Mammary epithelial cell (primary cell): ENCODE measurements at regions of chr3 and their contacts with region 1.

Region 1: DNA sequence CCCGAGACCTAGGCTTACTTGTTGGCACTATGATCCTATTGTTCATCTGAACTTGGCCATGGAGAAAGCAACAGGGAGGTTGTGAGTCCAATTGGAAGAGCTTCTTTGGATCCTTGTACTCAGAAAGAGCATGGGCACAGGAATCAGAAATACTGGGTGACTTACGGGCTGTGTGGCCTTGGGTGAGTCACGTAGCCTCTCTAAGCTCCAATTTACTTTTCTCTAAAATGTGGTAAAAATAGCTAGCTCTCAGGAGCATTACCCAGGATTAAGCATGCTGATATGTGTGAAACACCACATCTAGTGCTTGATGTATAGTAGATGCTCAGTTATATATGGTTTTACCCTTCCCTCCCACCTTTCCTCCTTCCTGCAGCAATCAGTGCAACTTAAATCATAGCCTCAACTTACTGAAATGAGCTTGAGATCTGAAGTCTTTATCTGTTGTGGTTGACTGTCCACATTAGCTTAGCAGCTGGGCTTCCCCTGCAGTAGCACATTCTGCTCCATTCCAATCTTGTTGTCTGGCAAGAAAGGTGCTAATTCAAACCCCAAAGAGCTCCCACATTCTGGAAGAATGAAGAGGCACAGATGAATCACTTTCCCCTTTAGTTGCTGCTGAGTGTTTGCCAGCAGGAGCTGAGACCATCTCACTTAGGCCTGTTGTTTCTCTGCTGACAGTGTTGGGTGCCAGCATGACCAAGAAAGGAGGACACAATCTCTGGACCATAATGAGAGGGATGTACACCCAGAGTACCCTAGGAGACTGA is 299.1 kb upstream of the TRIM42 start:
- DNase-seq: peak; percentile 34
- H3K4me3 ChIP-seq: no peak overlapping the region
- H3K27ac ChIP-seq: no peak overlapping the region
- H3K4me1 ChIP-seq: no peaks in the 10 kb centered on the region
- H3K27me3 ChIP-seq: no peaks in the 10 kb centered on the region
- CTCF ChIP-seq: no peak

Region 2: GRCh38 chr3:140552898-140553297 is 174.1 kb after region 1 on chr3:
- CTCF ChIA-PET with region 1: no interaction called
- dilution Hi-C with region 1: no loop called
- in situ Hi-C with region 1: no loop called
- intact Hi-C with region 1: loop called (anchors 5 kb)
- DNase-seq: peak; percentile 65
- H3K4me3 ChIP-seq: no peak overlapping the region
- H3K27ac ChIP-seq: no peak overlapping the region
- H3K4me1 ChIP-seq: no peaks in the 10 kb centered on the region
- H3K27me3 ChIP-seq: no peaks in the 10 kb centered on the region
- CTCF ChIP-seq: peak in 1 of 2 donors; percentile 13